ENCODE measurements at regions of chr11 and their contacts with region 1.

Region 1: GRCh38 chr11:46700241-46701077 is at the starts of genes ARHGAP1 and ZNF408:
- DNase-seq: peak; percentile 95 to 100 (median 99)
- ATAC-seq: peak; percentile 92
- H3K4me3 Mint-ChIP-seq: peak within 1 kb of the TSS; percentile 96 to 99 (median 98)
- H3K27ac Mint-ChIP-seq: peak within 1 kb of the TSS; percentile 93 to 99 (median 97)
- H3K4me1 Mint-ChIP-seq: peaks cover 22 to 71% (median 55%) of the 10 kb centered on the region in 4 donors
- H3K27me3 Mint-ChIP-seq: no peaks in the 10 kb centered on the region
- polyA plus RNA-seq, gene ARHGAP1: 35.5 to 63.1 (median 43.5) TPM
- polyA plus RNA-seq, gene ZNF408: 6.3 to 11.7 (median 9.6) TPM

Region 2: GRCh38 chr11:46616998-46617675 is 83.3 kb before region 1 on chr11 and contains the starts of genes ATG13 and HARBI1:
- POLR2A ChIA-PET with region 1: interaction called, 14 read pairs
- DNase-seq: peak; percentile 86 to 95 (median 92)
- ATAC-seq: peak; percentile 94 to 95
- H3K4me3 Mint-ChIP-seq: peak within 1 kb of the TSS; percentile 94 to 100 (median 99)
- H3K27ac Mint-ChIP-seq: peak within 1 kb of the TSS; percentile 98 to 100 (median 100)
- H3K4me1 Mint-ChIP-seq: peaks cover 19 to 55% (median 46%) of the 10 kb centered on the region in 4 donors
- H3K27me3 Mint-ChIP-seq: no peaks in the 10 kb centered on the region
- polyA plus RNA-seq, gene ATG13: 59.6 to 77.9 (median 67.6) TPM
- polyA plus RNA-seq, gene HARBI1: 5.5 to 7.7 (median 6.0) TPM

Region 3: GRCh38 chr11:46659908-46660307 is 40.6 kb before region 1 on chr11:
- POLR2A ChIA-PET with region 1: interaction called, 10 read pairs
- DNase-seq: no peak
- ATAC-seq: no peak
- H3K4me3 Mint-ChIP-seq: no peak overlapping the region
- H3K27ac Mint-ChIP-seq: peak overlapping the region in 2 of 10 donors; percentile 10 to 60
- H3K4me1 Mint-ChIP-seq: no peaks in the 10 kb centered on the region
- H3K27me3 Mint-ChIP-seq: no peaks in the 10 kb centered on the region

Region 4: DNA sequence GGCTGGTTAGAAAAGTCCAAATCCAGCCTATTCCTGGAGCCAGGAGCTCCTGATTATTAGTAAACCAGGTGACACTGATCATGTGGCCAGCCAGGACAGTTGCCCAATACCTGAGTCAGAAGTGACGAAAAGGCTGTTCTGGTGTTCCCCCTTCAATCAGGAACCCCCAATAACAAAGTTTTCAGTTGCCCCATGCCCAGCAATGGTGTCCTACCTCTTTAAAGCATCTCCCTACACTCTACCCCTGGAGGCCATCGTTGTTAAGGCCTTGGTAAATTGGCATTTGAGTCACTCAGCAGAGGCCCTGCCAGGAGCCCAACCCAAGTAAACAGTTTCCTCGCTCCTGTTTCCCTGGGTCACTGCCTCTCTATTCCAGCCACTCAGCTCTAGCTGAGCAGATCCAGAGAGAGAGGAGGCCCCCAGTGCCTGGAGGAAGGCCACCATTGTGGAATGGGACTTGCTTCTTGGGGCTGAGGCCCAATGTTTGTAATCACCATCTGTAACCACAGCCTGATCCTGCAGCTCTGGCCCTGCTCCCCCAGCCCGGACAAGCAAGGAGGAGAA is 25.1 kb before region 1 on chr11:
- POLR2A ChIA-PET with region 1: interaction called, 91 read pairs
- DNase-seq: no peak
- ATAC-seq: no peak
- H3K4me3 Mint-ChIP-seq: peak overlapping the region in 6 of 10 donors; percentile 12 to 82 (median 76)
- H3K27ac Mint-ChIP-seq: peak overlapping the region; percentile 12 to 95 (median 91)
- H3K4me1 Mint-ChIP-seq: peaks cover 32 to 77% (median 72%) of the 10 kb centered on the region in 4 donors
- H3K27me3 Mint-ChIP-seq: no peaks in the 10 kb centered on the region